ENCODE measurements at regions of chr11 and their contacts with region 1.

Region 1: GRCh38 chr11:10505278-10506007 is 35.5 kb downstream of the RNF141 start:
- DNase-seq: peak; percentile 65
- H3K4me3 ChIP-seq: no peak overlapping the region
- H3K27ac ChIP-seq: peak overlapping the region; percentile 71
- H3K4me1 ChIP-seq: peaks cover 19% of the 10 kb centered on the region
- H3K27me3 ChIP-seq: no peaks in the 10 kb centered on the region
- CTCF ChIP-seq: no peak
- POLR2A ChIP-seq: peak; percentile 24

Region 2: GRCh38 chr11:10371926-10372641 is 133.4 kb before region 1 on chr11:
- CTCF ChIA-PET with region 1: no interaction called
- POLR2A ChIA-PET with region 1: no interaction called
- dilution Hi-C with region 1: no loop called
- intact Hi-C with region 1: no loop called
- DNase-seq: no peak
- H3K4me3 ChIP-seq: no peak overlapping the region
- H3K27ac ChIP-seq: no peak overlapping the region
- H3K4me1 ChIP-seq: peaks cover 3% of the 10 kb centered on the region
- H3K27me3 ChIP-seq: no peaks in the 10 kb centered on the region
- CTCF ChIP-seq: no peak
- POLR2A ChIP-seq: no peak

Region 3: GRCh38 chr11:10490398-10491241 is 14.8 kb before region 1 on chr11:
- CTCF ChIA-PET with region 1: interaction called, 4 read pairs
- POLR2A ChIA-PET with region 1: no interaction called
- dilution Hi-C with region 1: no loop called
- intact Hi-C with region 1: loop called (anchors 1 kb)
- DNase-seq: peak; percentile 89
- H3K4me3 ChIP-seq: no peak overlapping the region
- H3K27ac ChIP-seq: peak overlapping the region; percentile 65
- H3K4me1 ChIP-seq: peaks cover 17% of the 10 kb centered on the region
- H3K27me3 ChIP-seq: no peaks in the 10 kb centered on the region
- CTCF ChIP-seq: no peak
- POLR2A ChIP-seq: no peak

Region 4: DNA sequence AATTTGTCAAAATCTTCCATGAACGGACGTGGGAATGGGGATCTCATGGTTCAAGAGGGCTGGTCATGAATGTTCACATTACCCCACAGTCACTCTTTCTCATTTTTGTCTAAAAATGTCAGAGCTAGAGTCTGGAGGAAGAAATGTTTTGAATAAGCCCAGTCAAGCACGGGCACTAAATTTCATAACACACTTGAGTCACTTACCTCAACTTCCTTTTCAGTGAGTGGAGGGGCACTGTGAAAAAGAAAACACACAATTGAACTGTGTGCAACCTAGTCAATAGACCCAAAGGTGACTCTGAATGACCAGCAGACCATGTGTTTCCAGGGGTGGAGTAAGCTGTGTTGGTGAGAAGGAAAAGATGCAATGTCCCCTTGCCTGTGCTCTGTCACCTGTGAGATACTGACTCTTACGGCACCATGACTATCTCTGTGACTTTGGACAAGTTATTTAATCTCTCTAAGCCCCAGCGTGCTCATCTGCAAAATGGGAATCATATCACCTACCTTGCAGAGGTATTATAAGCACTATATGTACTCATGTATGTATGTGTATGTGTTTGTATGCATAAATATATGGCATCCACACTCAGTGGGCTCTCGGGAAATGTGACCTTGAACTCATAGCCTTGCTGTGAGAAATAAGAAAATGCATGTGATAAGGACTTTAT is 101.2 kb after region 1 on chr11:
- CTCF ChIA-PET with region 1: no interaction called
- POLR2A ChIA-PET with region 1: no interaction called
- dilution Hi-C with region 1: no loop called
- intact Hi-C with region 1: no loop called
- DNase-seq: peak; percentile 79
- H3K4me3 ChIP-seq: no peak overlapping the region
- H3K27ac ChIP-seq: peak overlapping the region; percentile 25
- H3K4me1 ChIP-seq: peaks cover 29% of the 10 kb centered on the region
- H3K27me3 ChIP-seq: peaks cover 0 to 1% of the 10 kb centered on the region in 2 experiments
- CTCF ChIP-seq: no peak
- POLR2A ChIP-seq: no peak

Region 5: DNA sequence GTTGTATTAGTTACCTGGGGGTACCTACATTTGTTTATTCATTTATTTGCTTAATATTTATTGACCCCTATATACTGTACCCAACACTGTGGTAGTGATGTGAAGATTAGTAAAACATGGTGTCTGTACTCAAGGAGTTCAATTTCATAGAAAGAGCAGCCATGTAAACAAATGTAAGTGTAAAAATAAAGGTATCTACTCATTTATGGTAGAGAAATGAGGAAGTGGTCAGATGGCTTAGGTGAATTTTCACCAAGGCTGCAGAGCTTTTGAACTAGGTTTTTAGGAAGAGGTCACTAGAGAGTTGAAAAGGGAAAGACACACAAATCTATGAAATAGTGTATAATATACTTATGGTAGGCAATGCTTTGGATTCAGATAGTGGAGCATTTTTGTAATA is 256.7 kb after region 1 on chr11:
- CTCF ChIA-PET with region 1: no interaction called
- POLR2A ChIA-PET with region 1: no interaction called
- dilution Hi-C with region 1: no loop called
- intact Hi-C with region 1: no loop called
- DNase-seq: no peak
- H3K4me3 ChIP-seq: no peak overlapping the region
- H3K27ac ChIP-seq: no peak overlapping the region
- H3K4me1 ChIP-seq: peaks cover 4% of the 10 kb centered on the region
- H3K27me3 ChIP-seq: no peaks in the 10 kb centered on the region
- CTCF ChIP-seq: no peak
- POLR2A ChIP-seq: no peak